Right lobe of liver (tissue), 6 donors: ENCODE measurements at regions of chr20 and their contacts with region 1.

Region 1: DNA sequence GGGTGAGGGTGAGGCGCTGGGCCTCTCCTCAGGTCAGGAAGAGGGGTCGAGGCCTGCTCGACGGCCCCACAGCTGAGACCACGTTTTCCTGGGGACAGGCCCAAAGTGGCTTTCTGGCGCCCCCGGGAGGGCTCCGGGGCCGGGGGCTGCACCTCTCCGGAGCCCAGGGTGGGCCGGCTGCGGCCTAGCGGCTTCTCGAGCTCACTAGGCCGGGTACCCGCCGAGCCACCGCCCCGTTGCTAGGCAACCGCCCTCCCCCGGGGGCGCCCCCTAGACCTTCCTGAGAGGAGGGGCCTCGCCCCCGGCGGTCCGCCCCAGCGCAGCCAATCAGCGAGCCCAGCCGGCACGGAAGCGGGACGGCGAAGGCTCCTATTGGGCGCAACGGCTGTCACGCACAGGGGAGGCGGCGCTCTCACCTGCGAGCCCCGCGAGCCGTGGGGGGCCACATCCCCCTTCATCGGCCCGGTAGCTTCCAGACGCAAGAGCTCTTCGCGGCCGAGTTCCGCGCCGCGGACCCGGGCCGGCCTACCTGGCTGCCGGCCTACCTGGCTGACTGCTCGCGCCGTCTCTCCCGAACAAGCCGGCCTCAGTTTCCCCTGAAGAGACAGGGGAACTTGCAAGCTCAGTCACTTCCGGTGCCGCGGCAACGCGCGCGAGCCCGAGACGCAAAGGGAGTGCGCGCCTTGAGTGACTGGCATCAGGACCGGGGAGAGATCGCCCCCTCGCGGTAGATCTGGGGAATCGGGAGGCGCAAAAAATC is 831 bp upstream of the BCL2L1 start:
- DNase-seq: peak; percentile 99
- ATAC-seq: peak; percentile 83 to 95 (median 87)
- H3K4me3 ChIP-seq: peak overlapping the region; percentile 90 to 97 (median 95)
- H3K27ac ChIP-seq: peak overlapping the region; percentile 97 to 98 (median 97)
- H3K4me1 ChIP-seq: peaks cover 0 to 27% (median 9%) of the 10 kb centered on the region in 4 donors
- H3K27me3 ChIP-seq: no peaks in the 10 kb centered on the region
- CTCF ChIP-seq: peak; percentile 87 to 97 (median 92)
- POLR2A ChIP-seq: peak; percentile 59

Region 2: DNA sequence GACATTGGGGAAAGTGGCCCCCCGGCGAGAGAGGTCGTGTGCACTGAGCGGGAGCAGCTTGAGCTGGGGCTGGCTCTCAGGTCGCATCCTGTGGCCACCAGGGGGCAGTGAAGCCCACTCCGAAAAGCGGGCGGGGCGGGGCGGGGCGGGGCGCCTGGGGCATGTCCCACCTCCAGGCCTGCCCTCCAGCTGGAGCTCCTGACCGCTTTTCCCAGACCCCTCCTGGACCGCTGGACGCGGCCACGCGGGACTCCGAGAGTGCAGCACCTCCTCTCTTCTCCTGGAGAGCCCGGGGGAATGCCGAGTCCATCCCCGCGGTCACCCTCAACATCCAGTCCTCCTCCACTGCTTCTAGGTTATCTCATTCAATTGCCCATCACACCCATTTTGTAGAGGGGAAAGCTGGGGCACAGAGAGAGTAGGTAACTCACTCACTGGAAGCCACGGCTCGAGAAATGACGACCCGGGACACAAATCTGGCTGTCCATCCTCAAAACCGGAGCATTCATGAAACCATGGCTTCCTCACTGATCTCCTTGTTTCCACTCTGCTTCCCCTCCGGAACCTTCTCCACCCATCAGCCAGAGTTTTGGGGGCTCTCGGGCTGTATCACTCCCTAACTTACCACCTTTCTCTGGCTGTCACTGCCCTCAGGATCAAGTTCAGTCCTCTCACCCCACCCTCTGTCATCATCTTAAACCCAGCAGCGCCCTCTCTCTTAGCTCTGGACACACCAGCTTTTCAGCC is 61.7 kb before region 1 on chr20:
- intact Hi-C with region 1: loop called (anchors 5 kb)
- DNase-seq: peak; percentile 84 to 86 (median 86)
- ATAC-seq: peak; percentile 73 to 78 (median 77)
- H3K4me3 ChIP-seq: peak overlapping the region in 2 of 3 donors; percentile 43 to 49
- H3K27ac ChIP-seq: peak overlapping the region; percentile 45 to 69 (median 57)
- H3K4me1 ChIP-seq: peaks cover 0 to 45% (median 23%) of the 10 kb centered on the region in 4 donors
- H3K27me3 ChIP-seq: no peaks in the 10 kb centered on the region
- CTCF ChIP-seq: peak; percentile 69 to 88 (median 82)
- POLR2A ChIP-seq: peak; percentile 72

Region 3: GRCh38 chr20:31835977-31836852 is 112.7 kb after region 1 on chr20:
- intact Hi-C with region 1: no loop called
- DNase-seq: peak in 1 of 3 donors; percentile 61
- ATAC-seq: peak; percentile 41 to 78 (median 48)
- H3K4me3 ChIP-seq: no peak overlapping the region
- H3K27ac ChIP-seq: no peak overlapping the region
- H3K4me1 ChIP-seq: no peaks in the 10 kb centered on the region
- H3K27me3 ChIP-seq: no peaks in the 10 kb centered on the region
- CTCF ChIP-seq: no peak
- POLR2A ChIP-seq: no peak

Region 4: GRCh38 chr20:31869942-31870725 is 146.6 kb after region 1 on chr20 and contains the starts of genes DUSP15 and TTLL9:
- intact Hi-C with region 1: no loop called
- DNase-seq: peak in 1 of 3 donors; percentile 55
- ATAC-seq: peak; percentile 88 to 91 (median 90)
- H3K4me3 ChIP-seq: peak within 1 kb of the TSS; percentile 51 to 58 (median 54)
- H3K27ac ChIP-seq: no peak within 1 kb of the TSS
- H3K4me1 ChIP-seq: peaks cover 0 to 8% (median 2%) of the 10 kb centered on the region in 4 donors
- H3K27me3 ChIP-seq: no peaks in the 10 kb centered on the region
- CTCF ChIP-seq: no peak
- POLR2A ChIP-seq: no peak
- total RNA-seq, gene DUSP15: 0.22 to 1.1 (median 0.42) TPM in 3 of 6 experiments, not detected in the others
- total RNA-seq, gene TTLL9: not detected